Ascending aorta (tissue), 2 donors: ENCODE measurements at regions of chr16 and their contacts with region 1.

Region 1: DNA sequence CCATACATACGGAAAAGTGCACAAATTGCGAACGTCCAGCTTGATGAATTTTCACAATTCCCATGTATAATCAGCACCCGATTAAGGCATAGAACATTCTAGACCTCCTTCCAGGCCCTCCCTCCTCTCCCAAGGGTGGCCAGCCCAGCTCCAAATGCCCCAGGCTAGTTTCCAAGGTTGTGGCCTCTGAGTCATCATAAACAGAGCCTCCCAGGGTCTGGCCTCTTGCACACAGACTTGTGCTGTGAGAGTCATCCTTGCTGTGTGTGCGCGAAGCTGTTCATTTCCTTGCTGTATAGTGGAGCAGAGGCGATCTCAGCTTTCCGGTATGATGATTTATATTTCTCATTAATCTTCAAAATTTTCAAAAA is 20.5 kb upstream of the JPH3 start:
- DNase-seq: peak; percentile 75 to 95
- H3K4me3 ChIP-seq: peak overlapping the region; percentile 29 to 52
- H3K27ac ChIP-seq: peak overlapping the region; percentile 97 to 98
- H3K4me1 ChIP-seq: peaks cover 10 to 21% of the 10 kb centered on the region in 2 donors
- H3K27me3 ChIP-seq: no peaks in the 10 kb centered on the region
- CTCF ChIP-seq: no peak

Region 2: GRCh38 chr16:86554917-86555703 is 1026.7 kb before region 1 on chr16 and contains the start of gene MTHFSD:
- intact Hi-C with region 1: loop called (anchors 5 kb)
- DNase-seq: peak; percentile 65 to 96
- H3K4me3 ChIP-seq: peak within 1 kb of the TSS; percentile 77 to 89
- H3K27ac ChIP-seq: peak within 1 kb of the TSS; percentile 88 to 89
- H3K4me1 ChIP-seq: peaks cover 3 to 13% of the 10 kb centered on the region in 2 donors
- H3K27me3 ChIP-seq: no peaks in the 10 kb centered on the region
- CTCF ChIP-seq: no peak
- total RNA-seq, gene MTHFSD: 44.1 TPM

Region 3: DNA sequence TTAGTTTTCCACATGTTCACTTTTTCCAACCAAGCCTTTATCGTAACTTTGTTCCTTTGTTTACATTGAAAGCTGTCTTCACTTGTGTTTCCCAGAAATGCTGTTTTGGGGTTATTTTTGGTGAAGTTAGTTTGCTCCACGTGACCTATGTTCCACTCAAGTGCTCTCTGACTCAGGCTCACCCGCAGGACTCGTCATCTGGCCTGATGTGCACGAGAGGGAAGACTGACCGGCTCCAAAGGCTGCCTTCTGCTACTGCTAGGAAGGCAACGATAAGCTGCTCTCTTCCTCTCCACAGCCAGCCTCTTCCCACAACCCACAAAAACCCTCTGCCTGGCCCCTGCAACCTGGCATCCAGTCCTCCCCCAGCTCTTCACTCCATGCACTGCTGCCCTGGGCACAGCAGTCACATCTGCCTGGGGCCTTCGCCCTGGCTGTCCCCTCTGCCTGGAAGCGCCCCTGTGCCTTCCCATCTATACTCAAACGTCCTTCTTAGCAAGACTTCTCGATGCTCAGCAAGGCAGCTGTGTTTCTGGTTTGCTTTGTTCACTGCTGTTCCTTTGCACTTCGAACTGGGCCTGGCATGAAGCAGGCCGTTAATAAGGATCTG is 117.0 kb before region 1 on chr16:
- intact Hi-C with region 1: loop called (anchors 1 kb)
- DNase-seq: peak; percentile 85 to 95
- H3K4me3 ChIP-seq: peak overlapping the region; percentile 3 to 55
- H3K27ac ChIP-seq: peak overlapping the region; percentile 74 to 90
- H3K4me1 ChIP-seq: peaks cover 23 to 43% of the 10 kb centered on the region in 2 donors
- H3K27me3 ChIP-seq: no peaks in the 10 kb centered on the region
- CTCF ChIP-seq: no peak